ENCODE measurements at regions of chr3 and their contacts with region 1.

Region 1: DNA sequence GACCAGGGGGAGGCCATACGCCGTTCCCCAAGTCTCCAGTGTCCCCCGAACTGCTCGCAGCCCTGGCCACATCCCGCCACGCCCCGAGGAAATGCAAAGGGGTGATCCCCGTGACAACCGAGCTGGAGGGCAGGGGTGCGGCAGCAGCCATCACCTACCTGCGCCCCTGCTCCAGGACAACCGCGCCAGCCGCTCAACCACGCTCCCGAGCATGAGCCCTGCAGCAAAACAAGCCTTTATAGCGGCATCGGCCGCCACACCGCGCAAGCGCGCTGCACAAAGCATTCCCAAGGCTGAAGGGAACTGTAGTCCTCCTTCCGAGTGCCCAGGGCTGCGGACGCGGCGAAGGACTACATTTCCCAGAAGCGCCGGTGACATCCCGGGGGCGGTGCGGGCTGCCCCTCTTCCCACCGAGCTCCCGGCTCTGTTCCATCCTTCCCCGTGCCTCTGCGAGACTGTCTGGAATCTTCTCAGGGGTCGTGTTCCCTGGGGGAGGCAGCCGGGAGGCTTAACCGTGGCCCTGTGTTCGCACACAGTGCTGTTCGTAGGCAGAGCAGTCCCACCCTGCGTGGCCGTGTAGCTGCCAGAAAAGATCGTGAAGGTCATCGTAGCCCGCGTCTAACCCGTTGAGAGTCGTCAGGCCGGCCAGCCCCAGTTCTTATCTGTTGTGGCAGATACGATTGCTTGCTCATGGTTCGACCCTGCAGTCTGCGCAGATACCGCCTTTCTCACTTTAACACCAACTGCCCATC is at the start of gene ABCC5:
- DNase-seq: peak; percentile 92 to 93
- ATAC-seq: peak; percentile 87 to 88
- H3K4me3 ChIP-seq: peak within 1 kb of the TSS; percentile 98 to 100 (median 100)
- H3K27ac ChIP-seq: peak within 1 kb of the TSS; percentile 87 to 98 (median 92)
- H3K4me1 ChIP-seq: peaks cover 19 to 37% of the 10 kb centered on the region in 2 donors
- H3K27me3 ChIP-seq: no peaks in the 10 kb centered on the region
- CTCF ChIP-seq: peak in 3 of 5 experiments; percentile 42 to 56 (median 52)
- POLR2A ChIP-seq: peak; percentile 65 to 88
- total RNA-seq, gene ABCC5: 20.4 to 52.2 (median 39.5) TPM

Region 2: GRCh38 chr3:183635431-183636220 is 382.2 kb before region 1 on chr3 and contains the start of gene KLHL24:
- in situ Hi-C with region 1: no loop called
- intact Hi-C with region 1: loop called (anchors 10 kb)
- DNase-seq: peak; percentile 95 to 96
- ATAC-seq: peak; percentile 78 to 82
- H3K4me3 ChIP-seq: peak within 1 kb of the TSS; percentile 95 to 99 (median 98)
- H3K27ac ChIP-seq: peak within 1 kb of the TSS; percentile 99 to 100 (median 100)
- H3K4me1 ChIP-seq: peaks cover 31 to 34% of the 10 kb centered on the region in 2 donors
- H3K27me3 ChIP-seq: no peaks in the 10 kb centered on the region
- CTCF ChIP-seq: no peak
- POLR2A ChIP-seq: peak; percentile 100
- total RNA-seq, gene KLHL24: 118 to 301 (median 222) TPM

Region 3: DNA sequence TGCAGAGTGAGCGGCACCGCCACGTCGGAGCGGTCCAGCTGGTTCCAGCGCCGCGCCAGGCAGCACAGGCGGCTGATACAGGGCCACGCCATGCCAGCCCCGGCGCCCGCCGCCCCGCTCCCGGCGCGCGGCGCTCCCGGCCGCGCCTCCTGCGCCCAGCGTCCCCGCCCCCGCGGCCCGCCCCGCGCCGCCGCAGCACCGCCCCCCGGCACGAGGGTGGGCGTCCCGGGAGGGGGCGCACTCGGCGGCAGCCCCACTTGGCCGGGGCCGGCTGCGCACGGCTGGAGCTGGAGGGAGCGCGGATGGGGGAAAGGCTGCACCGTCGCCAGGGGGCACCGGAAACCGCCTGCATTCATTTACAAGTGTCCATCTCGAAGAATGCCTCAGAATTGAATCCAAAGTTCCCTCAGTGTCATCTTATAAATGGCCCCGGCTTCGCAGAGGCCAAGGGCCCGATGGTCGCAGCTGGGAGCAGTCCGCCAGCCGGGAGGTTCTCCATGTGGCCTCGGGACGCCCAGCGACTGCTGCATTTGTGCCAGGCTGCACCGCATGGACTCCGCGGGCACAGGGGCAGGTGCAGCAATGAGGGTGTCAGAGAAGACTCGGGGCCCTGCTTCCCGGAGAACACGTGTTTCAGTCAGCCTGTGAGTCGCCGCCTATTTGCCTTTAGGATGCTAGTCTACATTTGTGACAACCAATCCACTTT is 192.2 kb before region 1 on chr3 and contains the start of gene MAP6D1:
- in situ Hi-C with region 1: no loop called
- intact Hi-C with region 1: no loop called
- DNase-seq: peak in 1 of 2 donors; percentile 26
- ATAC-seq: peak; percentile 42 to 55
- H3K4me3 ChIP-seq: peak within 1 kb of the TSS; percentile 52 to 71 (median 62)
- H3K27ac ChIP-seq: peak within 1 kb of the TSS; percentile 67 to 75 (median 72)
- H3K4me1 ChIP-seq: peaks cover 23 to 29% of the 10 kb centered on the region in 2 donors
- H3K27me3 ChIP-seq: no peaks in the 10 kb centered on the region
- CTCF ChIP-seq: peak in 3 of 5 experiments; percentile 12 to 44 (median 22)
- POLR2A ChIP-seq: no peak
- total RNA-seq, gene MAP6D1: 2.5 to 13.8 (median 9.7) TPM

Region 4: GRCh38 chr3:183904833-183905780 is 112.7 kb before region 1 on chr3:
- in situ Hi-C with region 1: loop called in 1 of 4 experiments (anchors 5 kb)
- intact Hi-C with region 1: no loop called
- DNase-seq: no peak
- ATAC-seq: no peak
- H3K4me3 ChIP-seq: no peak overlapping the region
- H3K27ac ChIP-seq: no peak overlapping the region
- H3K4me1 ChIP-seq: no peaks in the 10 kb centered on the region
- H3K27me3 ChIP-seq: no peaks in the 10 kb centered on the region
- CTCF ChIP-seq: no peak
- POLR2A ChIP-seq: no peak

Region 5: DNA sequence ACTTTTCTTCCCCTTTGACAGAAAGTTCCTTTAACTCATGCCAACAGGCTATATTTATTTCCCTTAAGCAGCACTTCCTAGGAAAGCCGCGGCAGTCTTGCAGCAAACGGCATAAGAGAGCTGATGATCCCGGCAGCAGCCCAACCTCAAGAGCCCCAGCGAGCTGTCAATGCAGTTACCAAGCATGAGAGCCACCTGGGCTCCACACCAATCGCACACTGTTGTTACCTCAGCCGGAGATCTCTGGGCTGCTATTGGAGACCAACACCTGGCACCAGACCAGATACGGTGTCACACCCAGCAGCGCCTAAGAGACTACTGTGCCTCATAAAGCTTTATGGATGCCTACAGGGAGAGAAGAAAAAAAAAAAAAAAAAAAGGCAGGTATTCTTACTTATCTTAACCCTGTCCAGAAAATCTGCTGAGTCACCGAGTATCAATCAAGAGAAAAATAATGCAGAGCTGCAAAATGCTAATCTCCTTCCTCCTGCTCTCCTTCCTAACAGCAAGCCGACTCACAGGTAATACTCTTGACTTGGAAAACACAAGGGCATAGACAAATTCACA is 11.8 kb before region 1 on chr3:
- in situ Hi-C with region 1: no loop called
- intact Hi-C with region 1: loop called (anchors 1 kb)
- DNase-seq: peak; percentile 84 to 90
- ATAC-seq: peak; percentile 84 to 85
- H3K4me3 ChIP-seq: peak overlapping the region in 3 of 4 donors; percentile 5 to 34 (median 33)
- H3K27ac ChIP-seq: peak overlapping the region; percentile 84 to 88 (median 86)
- H3K4me1 ChIP-seq: peaks cover 62 to 64% of the 10 kb centered on the region in 2 donors
- H3K27me3 ChIP-seq: no peaks in the 10 kb centered on the region
- CTCF ChIP-seq: no peak
- POLR2A ChIP-seq: peak; percentile 17 to 47

Region 6: DNA sequence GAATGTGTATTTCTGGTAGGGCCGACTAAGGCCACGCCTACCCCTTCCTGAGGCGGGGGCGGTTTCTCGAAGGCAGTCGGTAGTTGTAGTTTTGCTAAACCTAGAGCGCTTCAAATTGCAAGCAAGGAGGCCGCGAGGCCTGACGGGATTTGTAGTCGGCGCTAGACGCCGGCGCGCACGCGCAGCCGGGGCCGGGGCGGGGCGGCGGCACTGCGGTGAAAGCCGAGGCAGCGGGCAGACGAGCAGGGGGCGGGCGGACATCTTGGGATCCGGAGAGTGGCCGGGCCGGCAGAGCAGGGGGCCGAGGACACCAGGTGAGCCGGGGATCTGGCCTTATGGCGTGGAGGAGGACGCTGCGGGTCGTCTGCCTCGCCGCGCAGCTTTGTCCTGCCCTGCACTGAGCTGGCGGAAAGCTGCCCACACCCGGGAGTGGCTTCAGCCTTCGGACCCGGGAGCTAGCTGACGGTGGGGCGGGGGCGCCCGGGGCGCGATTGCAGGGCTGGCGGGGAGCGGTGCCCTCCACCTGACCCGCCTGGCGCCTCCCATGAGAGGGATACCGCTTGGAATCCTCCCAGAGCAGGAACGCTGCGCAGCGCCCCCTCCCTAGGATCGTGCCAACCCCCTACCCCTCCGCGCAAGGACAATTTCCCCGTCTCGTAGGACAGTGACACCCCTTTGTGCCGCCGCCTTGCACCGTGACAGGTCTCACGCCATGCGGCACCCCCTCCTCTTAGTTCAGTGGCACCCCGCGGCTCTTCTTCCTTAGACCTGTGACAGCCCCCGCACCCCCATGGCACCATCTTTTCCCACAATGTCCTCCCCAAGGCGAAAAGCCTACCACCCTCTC is 157.0 kb after region 1 on chr3 and contains the start of gene AP2M1:
- in situ Hi-C with region 1: no loop called
- intact Hi-C with region 1: loop called (anchors 2 kb)
- DNase-seq: peak; percentile 98 to 100
- ATAC-seq: peak; percentile 94 to 96
- H3K4me3 ChIP-seq: peak within 1 kb of the TSS; percentile 95 to 98 (median 96)
- H3K27ac ChIP-seq: peak within 1 kb of the TSS; percentile 97 to 99 (median 98)
- H3K4me1 ChIP-seq: peaks cover 29 to 39% of the 10 kb centered on the region in 2 donors
- H3K27me3 ChIP-seq: no peaks in the 10 kb centered on the region
- CTCF ChIP-seq: peak in 1 of 5 experiments; percentile 14
- POLR2A ChIP-seq: peak; percentile 88 to 90
- total RNA-seq, gene AP2M1: 110 to 132 (median 117) TPM

Region 7: GRCh38 chr3:184362668-184363540 is 345.1 kb after region 1 on chr3:
- in situ Hi-C with region 1: no loop called
- intact Hi-C with region 1: loop called (anchors 1 kb)
- DNase-seq: peak; percentile 94 to 96
- ATAC-seq: peak; percentile 86 to 87
- H3K4me3 ChIP-seq: peak overlapping the region; percentile 58 to 94 (median 76)
- H3K27ac ChIP-seq: peak overlapping the region; percentile 91 to 100 (median 95)
- H3K4me1 ChIP-seq: peaks cover 17 to 23% of the 10 kb centered on the region in 2 donors
- H3K27me3 ChIP-seq: no peaks in the 10 kb centered on the region
- CTCF ChIP-seq: peak in 4 of 5 experiments; percentile 21 to 72 (median 55)
- POLR2A ChIP-seq: peak; percentile 82 to 88

Measured in gastrocnemius medialis (tissue), 4 donors.